ENCODE measurements at regions of chr1 and their contacts with region 1.

Region 1: DNA sequence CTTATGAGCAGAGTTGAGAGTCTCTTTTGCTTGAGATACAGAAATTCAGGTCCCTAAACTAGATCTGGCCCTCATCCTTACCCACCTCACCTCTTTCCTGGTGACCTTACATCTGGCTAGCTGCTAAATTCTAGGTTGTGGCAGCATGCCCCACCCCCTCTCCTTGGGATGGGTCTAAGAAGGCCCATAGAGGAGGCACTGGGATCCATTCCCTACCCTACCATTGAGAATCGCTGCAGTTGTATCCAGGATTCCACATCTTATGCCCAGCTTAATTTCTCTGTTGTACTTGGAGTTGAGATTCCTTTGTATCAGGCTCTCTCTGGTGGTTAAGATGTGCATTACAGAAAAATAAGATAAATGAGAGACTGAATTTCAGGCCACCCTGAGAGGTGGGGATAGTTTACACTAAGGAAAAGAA is 9.5 kb upstream of the TMEM39B start:
- DNase-seq: no peak
- H3K4me3 ChIP-seq: no peak overlapping the region
- H3K27ac ChIP-seq: peak overlapping the region; percentile 46 to 69 (median 62)
- H3K4me1 ChIP-seq: peaks cover 28 to 36% (median 34%) of the 10 kb centered on the region in 4 donors
- H3K27me3 ChIP-seq: no peaks in the 10 kb centered on the region
- CTCF ChIP-seq: peak; percentile 61 to 78 (median 67)
- EP300 ChIP-seq: no peak
- POLR2A ChIP-seq: no peak

Region 2: GRCh38 chr1:31984419-31985347 is 78.6 kb before region 1 on chr1:
- intact Hi-C with region 1: loop called (anchors 5 kb)
- DNase-seq: no peak
- H3K4me3 ChIP-seq: peak overlapping the region in 1 of 4 donors; percentile 7
- H3K27ac ChIP-seq: peak overlapping the region; percentile 13 to 57 (median 33)
- H3K4me1 ChIP-seq: peaks cover 9 to 12% (median 11%) of the 10 kb centered on the region in 4 donors
- H3K27me3 ChIP-seq: no peaks in the 10 kb centered on the region
- CTCF ChIP-seq: no peak
- EP300 ChIP-seq: no peak
- POLR2A ChIP-seq: no peak

Region 3: GRCh38 chr1:32013386-32014198 is 49.7 kb before region 1 on chr1 and contains the start of gene KHDRBS1:
- intact Hi-C with region 1: loop called (anchors 5 kb)
- DNase-seq: peak; percentile 100
- H3K4me3 ChIP-seq: peak within 1 kb of the TSS; percentile 82 to 100 (median 93)
- H3K27ac ChIP-seq: peak within 1 kb of the TSS; percentile 99 to 100 (median 100)
- H3K4me1 ChIP-seq: peaks cover 25 to 47% (median 44%) of the 10 kb centered on the region in 4 donors
- H3K27me3 ChIP-seq: no peaks in the 10 kb centered on the region
- CTCF ChIP-seq: peak in 1 of 3 experiments; percentile 22
- EP300 ChIP-seq: no peak
- POLR2A ChIP-seq: peak; percentile 94
- total RNA-seq, gene KHDRBS1: 71.8 to 90.5 (median 79.7) TPM

Measured in esophagus muscularis mucosa (tissue), 4 donors.